Naive thymus-derived CD4-positive, alpha-beta T cell (primary cell): ENCODE measurements at regions of chr1 and their contacts with region 1.

Region 1: DNA sequence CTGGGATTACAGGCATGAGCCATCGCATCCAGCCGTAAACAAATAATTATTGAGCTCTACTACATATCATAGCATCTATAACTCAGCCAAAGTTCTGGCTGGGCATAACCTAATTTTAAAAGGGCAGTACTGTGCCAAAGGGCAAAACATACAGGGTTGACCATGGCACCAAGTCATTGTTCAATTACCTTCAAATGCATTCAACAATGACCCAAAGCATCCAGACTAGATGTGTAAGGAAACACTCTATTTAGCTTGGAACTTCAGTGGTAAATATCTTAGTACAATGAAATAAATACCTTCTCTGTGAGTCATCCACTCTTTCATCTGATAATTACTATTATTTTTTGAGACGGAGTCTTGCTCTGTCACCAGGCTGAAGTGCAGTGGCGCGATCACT is 70.0 kb downstream of the NVL start:
- DNase-seq: no peak
- ATAC-seq: no peak
- H3K4me3 ChIP-seq: no peak overlapping the region
- H3K4me3 Mint-ChIP-seq: no peak overlapping the region
- H3K27ac ChIP-seq: no peak overlapping the region
- H3K27ac Mint-ChIP-seq: no peak overlapping the region
- H3K4me1 ChIP-seq: peaks cover 0 to 6% of the 10 kb centered on the region in 2 donors
- H3K4me1 Mint-ChIP-seq: peaks cover 14 to 28% (median 20%) of the 10 kb centered on the region in 7 donors
- H3K27me3 ChIP-seq: no peaks in the 10 kb centered on the region
- H3K27me3 Mint-ChIP-seq: no peaks in the 10 kb centered on the region

Region 2: DNA sequence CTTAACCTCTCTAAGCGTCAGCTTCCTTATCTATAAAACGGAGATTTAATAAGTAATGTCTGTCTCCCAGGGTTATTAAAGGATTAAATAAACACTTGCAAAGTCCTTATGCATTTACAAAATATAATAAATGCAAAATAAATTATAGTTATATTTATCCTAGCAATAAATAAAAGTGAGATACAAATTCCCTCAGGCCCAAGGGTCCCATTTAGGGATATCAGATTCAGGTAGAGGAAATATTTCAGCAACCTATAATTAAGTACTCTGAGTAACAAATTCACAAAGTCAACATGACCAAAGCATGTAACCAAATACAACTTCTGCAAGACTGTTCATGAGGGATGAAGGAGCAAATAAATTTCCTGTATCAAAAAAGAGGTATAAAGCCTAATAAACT is 52.1 kb after region 1 on chr1:
- CTCF ChIA-PET with region 1: no interaction called
- POLR2A ChIA-PET with region 1: no interaction called
- intact Hi-C with region 1: loop called in 1 of 2 experiments (anchors 5 kb)
- DNase-seq: no peak
- ATAC-seq: no peak
- H3K4me3 ChIP-seq: no peak overlapping the region
- H3K4me3 Mint-ChIP-seq: no peak overlapping the region
- H3K27ac ChIP-seq: no peak overlapping the region
- H3K27ac Mint-ChIP-seq: no peak overlapping the region
- H3K4me1 ChIP-seq: no peaks in the 10 kb centered on the region
- H3K4me1 Mint-ChIP-seq: peaks cover 0 to 6% (median 0%) of the 10 kb centered on the region in 7 donors
- H3K27me3 ChIP-seq: no peaks in the 10 kb centered on the region
- H3K27me3 Mint-ChIP-seq: no peaks in the 10 kb centered on the region